GM13976 (cell line): ENCODE measurements at regions of chr3 and their contacts with region 1.

Region 1: GRCh38 chr3:58628823-58629562 is 37.6 kb downstream of the FAM3D start:
- DNase-seq: no peak
- CTCF ChIP-seq: no peak

Region 2: DNA sequence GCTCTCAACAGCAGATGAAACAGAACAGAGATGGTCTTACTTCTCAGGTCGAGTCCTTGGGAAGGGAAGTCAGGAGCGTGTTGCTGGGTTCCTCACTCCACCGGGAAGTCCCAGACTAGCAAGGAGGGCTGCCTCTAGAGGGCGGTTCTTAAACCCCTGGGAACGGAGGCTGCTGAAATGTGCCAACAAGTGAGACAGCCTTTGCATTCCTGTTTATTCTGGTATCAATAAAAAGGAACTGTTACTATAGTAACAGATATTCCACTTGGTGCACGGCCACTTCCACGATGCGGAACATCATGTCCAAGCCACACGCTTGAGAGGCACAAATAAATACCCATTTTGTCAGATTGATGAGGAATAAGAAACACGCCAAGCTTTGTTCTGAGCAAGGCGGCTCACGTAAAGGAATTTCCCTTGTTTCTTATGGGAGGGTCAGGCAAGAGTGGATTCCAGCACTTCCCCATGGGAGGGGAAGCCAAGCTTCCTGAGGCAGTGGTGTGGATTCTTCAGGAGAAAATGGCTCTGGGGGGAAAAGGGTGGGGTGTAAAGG is 51.6 kb before region 1 on chr3 and contains the start of gene FAM107A:
- in situ Hi-C with region 1: loop called (anchors 10 kb)
- DNase-seq: no peak
- CTCF ChIP-seq: no peak